HepG2 (cell line): ENCODE measurements at regions of chr18 and their contacts with region 1.

Region 1: GRCh38 chr18:50866765-50867164 is 12.2 kb upstream of the ME2 start:
- DNase-seq: no peak
- ATAC-seq: peak; percentile 67
- H3K4me3 ChIP-seq: no peak overlapping the region
- H3K27ac ChIP-seq: no peak overlapping the region
- H3K4me1 ChIP-seq: no peaks in the 10 kb centered on the region
- H3K27me3 ChIP-seq: no peaks in the 10 kb centered on the region
- CTCF ChIP-seq: 0 out of 2 replicates have a peak, but pooled peaks have one; percentile 31
- EP300 ChIP-seq: no peak
- POLR2A ChIP-seq: no peak
- RAD21 ChIP-seq: no peak

Region 2: GRCh38 chr18:50819728-50820378 is 46.9 kb before region 1 on chr18 and contains the start of gene MRO:
- CTCF ChIA-PET with region 1: no interaction called
- POLR2A ChIA-PET with region 1: no interaction called
- in situ Hi-C with region 1: no loop called
- intact Hi-C with region 1: loop called (anchors 1 kb)
- DNase-seq: peak; percentile 58
- ATAC-seq: peak; percentile 97
- H3K4me3 ChIP-seq: peak within 1 kb of the TSS in 2 of 3 experiments; percentile 21 to 38; a peak in 4 of 6 replicates
- H3K27ac ChIP-seq: no peak within 1 kb of the TSS
- H3K4me1 ChIP-seq: peaks cover 19% of the 10 kb centered on the region
- H3K27me3 ChIP-seq: peaks cover 0 to 6% of the 10 kb centered on the region in 2 experiments; a peak in 1 of 5 replicates
- CTCF ChIP-seq: peak; percentile 98
- EP300 ChIP-seq: no peak
- POLR2A ChIP-seq: no peak
- RAD21 ChIP-seq: peak; percentile 93
- total RNA-seq, gene MRO: not detected in 2 replicates